Activated CD4-positive, alpha-beta T cell treated with anti-CD3 and anti-CD28 coated beads, Interleukin-2, amount 10 ng/mL, durations not matched to agents 24 days and 14 days (primary cell): ENCODE measurements at regions of chr6 and their contacts with region 1.

Region 1: DNA sequence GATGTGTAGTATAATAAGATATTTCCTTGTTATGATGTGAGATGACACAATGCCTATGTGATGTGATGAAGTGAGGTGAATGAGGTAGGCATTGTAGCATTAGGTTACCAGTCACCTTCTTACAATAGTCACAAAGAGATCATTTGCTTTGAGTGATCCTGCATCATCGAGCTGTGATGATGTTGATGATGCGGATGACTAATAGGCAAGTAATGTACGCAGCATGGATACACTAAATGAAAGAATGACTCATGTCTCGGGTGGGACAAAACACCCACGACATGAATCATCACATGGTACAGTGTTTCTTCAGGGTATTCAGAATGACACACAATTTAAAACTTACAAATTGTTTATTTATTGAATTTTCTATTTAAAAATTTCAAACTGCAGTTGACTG is 806.3 kb upstream of the GJE1 start:
- DNase-seq: peak; percentile 71
- H3K4me3 Mint-ChIP-seq: no peak overlapping the region
- H3K27ac Mint-ChIP-seq: no peak overlapping the region
- H3K4me1 Mint-ChIP-seq: peaks cover 9% of the 10 kb centered on the region
- H3K27me3 Mint-ChIP-seq: peaks cover 1% of the 10 kb centered on the region

Region 2: DNA sequence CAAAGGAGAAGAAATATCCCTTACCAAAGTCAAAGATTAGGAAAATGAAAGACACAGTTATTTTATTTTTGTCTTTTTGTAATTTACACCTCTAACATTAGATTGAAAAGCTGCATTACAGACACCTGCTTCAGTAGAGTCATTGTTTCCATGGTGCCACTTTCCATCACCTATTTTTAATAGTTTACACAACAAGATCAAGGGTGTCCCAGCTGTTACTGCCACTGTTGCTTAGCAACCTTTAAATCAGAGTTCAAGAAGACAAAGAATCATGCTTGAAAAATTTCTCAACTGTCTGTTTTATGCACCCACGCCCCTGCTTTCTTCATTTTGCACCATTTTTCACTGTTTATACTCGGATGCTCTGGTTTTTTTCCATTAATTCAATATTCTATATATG is 138.1 kb after region 1 on chr6:
- intact Hi-C with region 1: loop called (anchors 5 kb)
- DNase-seq: no peak
- H3K4me3 Mint-ChIP-seq: no peak overlapping the region
- H3K27ac Mint-ChIP-seq: no peak overlapping the region
- H3K4me1 Mint-ChIP-seq: peaks cover 10% of the 10 kb centered on the region
- H3K27me3 Mint-ChIP-seq: no peaks in the 10 kb centered on the region